ENCODE measurements at regions of chrX and their contacts with region 1.

Region 1: GRCh38 chrX:19811807-19812604 is 75.4 kb downstream of the SH3KBP1 start:
- DNase-seq: no peak
- H3K4me3 ChIP-seq: no peak overlapping the region
- H3K4me3 Mint-ChIP-seq: peak overlapping the region in 4 of 8 donors; percentile 7 to 65 (median 22)
- H3K27ac ChIP-seq: no peak overlapping the region
- H3K27ac Mint-ChIP-seq: peak overlapping the region; percentile 57 to 84 (median 74)
- H3K4me1 ChIP-seq: peaks cover 54% of the 10 kb centered on the region
- H3K4me1 Mint-ChIP-seq: peaks cover 38 to 71% (median 56%) of the 10 kb centered on the region in 4 donors
- H3K27me3 ChIP-seq: no peaks in the 10 kb centered on the region
- H3K27me3 Mint-ChIP-seq: no peaks in the 10 kb centered on the region

Region 2: GRCh38 chrX:19659925-19660324 is 152.1 kb before region 1 on chrX:
- CTCF ChIA-PET with region 1: no interaction called
- POLR2A ChIA-PET with region 1: no interaction called
- intact Hi-C with region 1: no loop called
- DNase-seq: no peak
- H3K4me3 ChIP-seq: no peak overlapping the region
- H3K4me3 Mint-ChIP-seq: no peak overlapping the region
- H3K27ac ChIP-seq: no peak overlapping the region
- H3K27ac Mint-ChIP-seq: peak overlapping the region in 4 of 7 donors; percentile 3 to 72 (median 61)
- H3K4me1 ChIP-seq: no peaks in the 10 kb centered on the region
- H3K4me1 Mint-ChIP-seq: peaks cover 23 to 54% (median 37%) of the 10 kb centered on the region in 4 donors
- H3K27me3 ChIP-seq: no peaks in the 10 kb centered on the region
- H3K27me3 Mint-ChIP-seq: no peaks in the 10 kb centered on the region

Region 3: DNA sequence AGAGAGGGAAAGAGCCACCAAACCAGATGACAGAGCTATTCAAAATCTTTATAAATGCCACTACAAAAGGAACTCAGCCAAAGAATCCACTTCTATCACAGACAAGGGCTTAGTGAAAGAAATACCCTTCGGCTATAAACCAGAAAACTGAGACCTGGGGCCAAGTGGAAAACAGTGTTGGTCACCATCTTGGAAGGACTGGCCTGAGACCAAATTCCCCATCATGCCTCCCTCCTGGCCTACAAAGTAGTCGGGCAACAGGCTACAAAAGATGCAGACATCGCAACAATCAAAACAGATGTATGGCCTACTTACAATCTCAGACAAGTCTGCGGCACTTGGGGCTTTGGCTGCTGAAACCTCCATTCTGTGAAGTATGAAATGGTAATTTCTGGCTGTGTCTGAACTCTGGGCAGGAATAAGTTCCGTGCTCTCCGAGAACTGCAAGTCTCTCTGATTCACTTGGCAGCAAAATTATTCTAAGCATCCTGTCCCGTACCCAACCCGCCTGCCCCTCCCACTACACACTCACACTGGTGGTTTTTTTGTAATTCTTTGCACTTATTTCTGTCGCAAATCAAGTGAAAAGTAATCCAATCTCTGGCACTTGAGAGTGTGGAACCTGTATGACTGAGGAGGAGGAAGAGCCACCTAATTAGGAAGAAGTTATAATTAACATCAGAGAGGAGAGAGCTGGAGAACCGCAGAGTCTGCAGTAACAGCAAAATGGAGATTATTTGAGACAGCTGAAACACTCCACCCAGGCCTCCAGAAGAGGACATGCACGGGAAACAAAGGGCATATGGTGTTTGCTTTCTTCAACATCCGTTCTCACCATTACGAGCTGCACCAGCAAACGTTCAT is 12.5 kb before region 1 on chrX:
- CTCF ChIA-PET with region 1: interaction called, 3 read pairs
- POLR2A ChIA-PET with region 1: interaction called, 12 read pairs
- intact Hi-C with region 1: no loop called
- DNase-seq: peak; percentile 64 to 76 (median 72)
- H3K4me3 ChIP-seq: peak overlapping the region; percentile 55 to 68
- H3K4me3 Mint-ChIP-seq: peak overlapping the region; percentile 90 to 96 (median 93)
- H3K27ac ChIP-seq: peak overlapping the region; percentile 68
- H3K27ac Mint-ChIP-seq: peak overlapping the region; percentile 88 to 98 (median 95)
- H3K4me1 ChIP-seq: peaks cover 67% of the 10 kb centered on the region
- H3K4me1 Mint-ChIP-seq: peaks cover 38 to 81% (median 51%) of the 10 kb centered on the region in 4 donors
- H3K27me3 ChIP-seq: no peaks in the 10 kb centered on the region
- H3K27me3 Mint-ChIP-seq: no peaks in the 10 kb centered on the region

Region 4: GRCh38 chrX:19824603-19825002 is 12.6 kb after region 1 on chrX:
- CTCF ChIA-PET with region 1: interaction called, 11 read pairs
- POLR2A ChIA-PET with region 1: interaction called, 6 read pairs
- intact Hi-C with region 1: no loop called
- DNase-seq: peak in 1 of 5 donors; percentile 35
- H3K4me3 ChIP-seq: no peak overlapping the region
- H3K4me3 Mint-ChIP-seq: no peak overlapping the region
- H3K27ac ChIP-seq: no peak overlapping the region
- H3K27ac Mint-ChIP-seq: peak overlapping the region in 1 of 7 donors; percentile 47
- H3K4me1 ChIP-seq: peaks cover 38% of the 10 kb centered on the region
- H3K4me1 Mint-ChIP-seq: peaks cover 12 to 46% (median 22%) of the 10 kb centered on the region in 4 donors
- H3K27me3 ChIP-seq: no peaks in the 10 kb centered on the region
- H3K27me3 Mint-ChIP-seq: no peaks in the 10 kb centered on the region